Thyroid gland (tissue), 4 donors: ENCODE measurements at regions of chr4 and their contacts with region 1.

Region 1: DNA sequence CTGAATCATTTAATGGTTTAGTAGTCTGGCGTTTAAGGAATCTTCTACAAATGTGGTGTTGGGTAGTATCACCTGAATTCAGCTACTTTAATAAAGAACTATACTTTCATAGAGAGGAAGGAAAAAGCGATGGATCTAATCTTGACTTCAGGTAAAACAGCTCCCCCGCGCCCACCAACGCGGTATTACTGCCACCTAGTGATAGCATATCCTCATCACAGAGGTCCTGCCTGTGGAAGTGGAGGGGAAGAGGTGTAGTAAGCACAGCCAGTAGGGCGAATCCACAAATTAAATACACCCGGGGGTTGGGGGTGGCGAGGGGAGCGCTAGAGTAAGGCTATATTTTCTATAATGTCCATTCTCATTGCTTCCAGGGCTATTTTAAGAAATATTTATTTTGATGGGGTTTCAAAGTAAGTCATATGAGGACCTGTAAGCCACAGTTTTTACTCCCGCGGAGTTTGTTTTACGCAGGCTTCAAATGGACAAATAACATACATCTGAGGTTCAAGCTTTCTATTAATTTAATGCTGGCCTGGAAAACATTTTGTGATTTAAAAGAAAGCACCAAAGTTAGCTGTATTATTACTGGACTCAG is 8.3 kb upstream of the DAPP1 start:
- DNase-seq: peak; percentile 39 to 44
- H3K4me3 ChIP-seq: no peak overlapping the region
- H3K27ac ChIP-seq: no peak overlapping the region
- H3K4me1 ChIP-seq: no peaks in the 10 kb centered on the region
- H3K27me3 ChIP-seq: no peaks in the 10 kb centered on the region
- CTCF ChIP-seq: peak in 4 of 6 experiments; percentile 47 to 52 (median 49)
- POLR2A ChIP-seq: no peak

Region 2: GRCh38 chr4:99536271-99536670 is 272.1 kb before region 1 on chr4:
- intact Hi-C with region 1: no loop called
- DNase-seq: no peak
- H3K4me3 ChIP-seq: no peak overlapping the region
- H3K27ac ChIP-seq: no peak overlapping the region
- H3K4me1 ChIP-seq: no peaks in the 10 kb centered on the region
- H3K27me3 ChIP-seq: no peaks in the 10 kb centered on the region
- CTCF ChIP-seq: no peak
- POLR2A ChIP-seq: no peak

Region 3: DNA sequence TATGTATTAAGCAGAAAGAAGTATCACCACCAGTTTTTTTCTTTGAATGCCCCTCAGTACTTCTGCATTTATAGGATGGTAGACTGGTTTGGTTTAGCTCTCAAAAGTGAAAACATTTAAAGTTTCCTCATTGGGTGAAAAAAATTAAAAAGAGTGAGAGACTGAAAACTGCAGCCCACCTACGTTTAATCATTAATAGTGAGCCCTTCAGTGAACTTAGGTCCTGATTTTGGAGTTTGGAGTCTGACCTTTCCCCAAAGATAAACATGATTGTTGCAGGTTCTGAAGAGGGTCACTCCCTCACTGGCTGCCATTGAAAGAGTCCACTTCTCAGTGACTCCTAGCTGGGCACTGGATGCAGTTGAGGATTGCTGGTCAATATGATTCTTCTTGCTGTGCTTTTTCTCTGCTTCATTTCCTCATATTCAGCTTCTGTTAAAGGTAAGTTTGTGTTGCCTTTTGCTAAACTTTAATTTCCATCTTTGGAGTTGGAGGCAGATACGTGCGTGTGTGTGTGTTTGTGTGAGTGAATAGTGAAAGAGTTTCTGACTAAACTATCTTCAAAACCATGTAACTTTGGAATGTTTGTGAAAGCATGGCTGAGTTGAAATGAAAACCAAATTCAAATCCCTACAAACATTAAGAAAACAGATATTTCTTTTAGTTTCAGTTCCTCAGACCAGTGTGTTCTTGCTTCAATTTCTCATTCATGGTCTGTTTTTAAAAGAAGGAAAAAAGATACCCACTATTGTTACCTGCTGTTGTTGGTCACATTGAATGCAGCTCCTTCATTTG is 233.6 kb before region 1 on chr4 and contains the start of gene MTTP:
- intact Hi-C with region 1: loop called (anchors 10 kb)
- DNase-seq: no peak
- H3K4me3 ChIP-seq: no peak within 1 kb of the TSS
- H3K27ac ChIP-seq: no peak within 1 kb of the TSS
- H3K4me1 ChIP-seq: no peaks in the 10 kb centered on the region
- H3K27me3 ChIP-seq: no peaks in the 10 kb centered on the region
- CTCF ChIP-seq: no peak
- POLR2A ChIP-seq: no peak
- total RNA-seq, gene MTTP: 0.50 to 0.67 TPM in 2 of 4 donors, not detected in the others